ENCODE measurements at regions of chr1 and their contacts with region 1.

Region 1: GRCh38 chr1:231387770-231388669 is 34.1 kb downstream of the EGLN1 start:
- DNase-seq: peak; percentile 74
- ATAC-seq: peak; percentile 66
- H3K4me3 ChIP-seq: no peak overlapping the region
- H3K27ac ChIP-seq: peak overlapping the region; percentile 17
- H3K4me1 ChIP-seq: peaks cover 54% of the 10 kb centered on the region
- H3K27me3 ChIP-seq: no peaks in the 10 kb centered on the region
- CTCF ChIP-seq: no peak

Region 2: GRCh38 chr1:231335663-231336602 is 52.1 kb before region 1 on chr1:
- CTCF ChIA-PET with region 1: no interaction called
- POLR2A ChIA-PET with region 1: no interaction called
- intact Hi-C with region 1: no loop called
- DNase-seq: peak; percentile 46
- ATAC-seq: no peak
- H3K4me3 ChIP-seq: peak overlapping the region; percentile 95
- H3K27ac ChIP-seq: no peak overlapping the region
- H3K4me1 ChIP-seq: peaks cover 17% of the 10 kb centered on the region
- H3K27me3 ChIP-seq: no peaks in the 10 kb centered on the region
- CTCF ChIP-seq: no peak

Region 3: GRCh38 chr1:231407547-231408396 is 19.8 kb after region 1 on chr1:
- CTCF ChIA-PET with region 1: no interaction called
- POLR2A ChIA-PET with region 1: no interaction called
- intact Hi-C with region 1: loop called (anchors 2 kb)
- DNase-seq: peak; percentile 65
- ATAC-seq: peak; percentile 99
- H3K4me3 ChIP-seq: peak overlapping the region; percentile 43
- H3K27ac ChIP-seq: peak overlapping the region; percentile 60
- H3K4me1 ChIP-seq: peaks cover 30% of the 10 kb centered on the region
- H3K27me3 ChIP-seq: no peaks in the 10 kb centered on the region
- CTCF ChIP-seq: no peak

Measured in PC-3 (cell line).